ENCODE measurements at regions of chr3 and their contacts with region 1.

Region 1: DNA sequence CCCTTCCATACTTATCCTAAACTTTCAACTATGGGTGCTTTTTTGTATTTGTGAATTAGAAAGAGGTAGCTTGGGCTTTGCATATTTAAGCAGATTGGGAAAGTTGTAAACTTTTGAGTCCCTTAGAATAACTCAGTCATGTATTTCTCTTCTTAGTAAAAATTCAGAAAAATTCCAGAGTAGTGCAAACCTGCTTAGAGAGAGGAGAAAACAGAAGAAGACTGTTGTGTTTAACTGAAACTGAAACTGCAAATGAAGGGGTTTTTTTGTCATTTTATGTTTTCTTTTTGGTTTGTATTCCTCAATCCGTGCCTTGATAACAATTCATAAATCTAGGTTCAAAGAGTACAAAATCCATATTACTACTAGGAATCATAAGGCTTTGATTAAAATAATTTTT is 31.3 kb downstream of the CD200 start:
- DNase-seq: no peak
- H3K4me3 ChIP-seq: no peak overlapping the region
- CTCF ChIP-seq: no peak

Region 2: DNA sequence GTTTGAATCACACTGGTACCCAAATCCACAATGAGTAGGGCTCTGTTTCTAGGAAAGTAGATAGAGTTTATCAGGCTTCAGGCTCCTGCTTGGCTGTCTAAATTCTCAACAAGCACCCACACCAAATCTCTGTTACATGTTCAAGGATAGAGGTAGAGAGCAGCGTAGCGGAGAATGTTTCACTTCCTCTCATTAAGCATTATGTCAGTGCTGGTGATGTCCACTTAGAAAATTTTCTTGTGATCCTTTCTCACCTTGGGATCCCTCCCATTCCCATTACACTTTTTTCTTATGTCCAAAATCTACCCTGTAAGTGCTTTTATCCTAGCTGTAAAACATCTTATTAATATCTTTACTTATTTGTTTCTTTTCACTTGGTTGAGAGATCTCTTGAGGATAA is 196.5 kb before region 1 on chr3:
- in situ Hi-C with region 1: no loop called
- DNase-seq: no peak
- H3K4me3 ChIP-seq: no peak overlapping the region
- CTCF ChIP-seq: no peak

Region 3: GRCh38 chr3:112273536-112273935 is 90.8 kb before region 1 on chr3:
- in situ Hi-C with region 1: no loop called
- DNase-seq: no peak
- H3K4me3 ChIP-seq: no peak overlapping the region
- CTCF ChIP-seq: no peak

Region 4: DNA sequence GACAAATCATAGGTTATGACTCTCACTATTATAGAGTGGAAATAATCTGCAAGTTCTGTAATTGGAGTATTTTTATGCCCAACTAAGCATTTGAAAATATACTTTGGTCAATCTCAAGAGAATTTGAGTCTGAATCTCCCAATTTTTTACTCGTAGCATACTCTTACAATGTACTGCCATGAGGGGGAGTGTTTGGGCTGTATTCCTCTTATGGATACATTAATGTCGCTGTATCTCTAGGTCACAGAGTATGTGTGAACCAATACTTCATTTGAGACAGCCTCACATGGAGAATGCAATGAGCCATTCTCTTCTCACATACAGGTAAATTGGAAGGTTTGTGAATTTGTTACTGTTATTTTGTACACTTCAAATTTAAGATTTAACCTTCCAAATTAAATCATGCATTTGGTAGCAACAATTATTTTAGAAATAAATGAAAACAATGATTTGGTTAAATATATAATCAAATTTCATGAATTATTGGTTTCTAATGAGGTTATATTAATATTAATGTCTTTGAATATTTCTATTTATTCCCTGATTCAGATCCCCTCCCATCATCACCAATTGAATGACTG is 36.8 kb before region 1 on chr3:
- in situ Hi-C with region 1: no loop called
- DNase-seq: peak; percentile 50
- H3K4me3 ChIP-seq: no peak overlapping the region
- CTCF ChIP-seq: peak; percentile 60

Region 5: DNA sequence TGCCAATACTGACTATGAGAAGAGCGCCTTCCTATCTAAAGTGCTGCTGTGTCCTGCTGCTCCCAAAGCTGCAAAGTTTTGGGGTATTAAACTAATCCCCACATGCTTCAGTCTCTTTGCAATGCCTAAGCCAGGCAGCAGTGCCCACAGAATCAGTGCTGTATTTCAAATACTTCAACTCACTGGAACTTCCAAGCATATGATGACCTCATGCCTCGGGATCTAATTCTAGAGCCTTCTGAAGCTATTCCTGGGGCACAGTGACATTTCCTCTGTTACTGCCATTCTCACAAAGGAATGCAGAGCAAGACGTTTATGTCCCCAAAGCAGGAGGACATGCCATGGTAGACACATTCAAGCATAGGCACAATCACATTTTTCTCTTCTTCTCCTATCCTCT is 47.1 kb after region 1 on chr3:
- in situ Hi-C with region 1: loop called (anchors 5 kb)
- DNase-seq: no peak
- H3K4me3 ChIP-seq: no peak overlapping the region
- CTCF ChIP-seq: no peak